ENCODE measurements at regions of chr10 and their contacts with region 1.

Region 1: DNA sequence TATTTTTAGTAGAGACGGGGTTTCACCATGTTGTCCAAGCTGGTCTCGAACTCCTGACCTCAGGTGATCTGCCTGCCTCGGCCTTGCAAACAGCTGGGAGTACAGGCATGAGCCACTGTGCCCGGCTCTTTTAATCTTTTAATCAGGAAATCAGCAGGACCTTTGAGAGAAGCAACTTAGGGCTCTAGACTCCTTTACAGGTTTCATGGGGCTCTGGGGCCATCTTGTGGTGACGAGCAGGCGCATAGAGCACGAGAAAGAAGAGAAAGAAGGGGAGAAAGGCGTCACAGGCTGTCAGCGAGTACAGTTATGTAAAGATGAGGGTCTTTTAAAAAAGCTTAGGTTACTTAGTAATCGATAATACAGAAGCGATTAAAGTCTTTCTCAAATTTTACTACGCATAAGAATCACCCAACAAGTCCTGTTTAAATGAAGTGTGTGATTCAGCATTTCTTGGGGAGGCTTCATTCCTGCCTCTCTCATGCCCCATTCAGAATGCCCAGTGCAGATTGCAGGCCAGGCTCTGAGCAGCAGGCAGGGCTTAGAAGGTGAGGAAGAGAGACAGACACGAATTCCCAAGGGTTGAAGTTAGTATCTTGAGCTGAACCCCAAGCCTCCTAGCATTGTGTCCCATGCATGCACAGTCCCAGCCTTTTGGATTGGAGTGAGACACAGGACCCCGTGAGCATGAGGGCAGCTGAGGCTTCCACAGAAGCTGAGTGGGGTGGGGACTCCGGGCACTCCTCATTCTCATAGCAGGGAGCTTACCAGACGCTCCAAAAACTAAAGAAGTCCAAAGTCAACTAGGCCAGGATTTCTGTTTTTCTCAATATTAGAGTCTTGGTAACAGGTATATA is 23.6 kb upstream of the PFKP start:
- DNase-seq: peak; percentile 56 to 78 (median 71)
- ATAC-seq: peak; percentile 77 to 85
- H3K4me3 ChIP-seq: no peak overlapping the region
- H3K27ac ChIP-seq: no peak overlapping the region
- H3K4me1 ChIP-seq: no peaks in the 10 kb centered on the region
- H3K27me3 ChIP-seq: no peaks in the 10 kb centered on the region

Region 2: DNA sequence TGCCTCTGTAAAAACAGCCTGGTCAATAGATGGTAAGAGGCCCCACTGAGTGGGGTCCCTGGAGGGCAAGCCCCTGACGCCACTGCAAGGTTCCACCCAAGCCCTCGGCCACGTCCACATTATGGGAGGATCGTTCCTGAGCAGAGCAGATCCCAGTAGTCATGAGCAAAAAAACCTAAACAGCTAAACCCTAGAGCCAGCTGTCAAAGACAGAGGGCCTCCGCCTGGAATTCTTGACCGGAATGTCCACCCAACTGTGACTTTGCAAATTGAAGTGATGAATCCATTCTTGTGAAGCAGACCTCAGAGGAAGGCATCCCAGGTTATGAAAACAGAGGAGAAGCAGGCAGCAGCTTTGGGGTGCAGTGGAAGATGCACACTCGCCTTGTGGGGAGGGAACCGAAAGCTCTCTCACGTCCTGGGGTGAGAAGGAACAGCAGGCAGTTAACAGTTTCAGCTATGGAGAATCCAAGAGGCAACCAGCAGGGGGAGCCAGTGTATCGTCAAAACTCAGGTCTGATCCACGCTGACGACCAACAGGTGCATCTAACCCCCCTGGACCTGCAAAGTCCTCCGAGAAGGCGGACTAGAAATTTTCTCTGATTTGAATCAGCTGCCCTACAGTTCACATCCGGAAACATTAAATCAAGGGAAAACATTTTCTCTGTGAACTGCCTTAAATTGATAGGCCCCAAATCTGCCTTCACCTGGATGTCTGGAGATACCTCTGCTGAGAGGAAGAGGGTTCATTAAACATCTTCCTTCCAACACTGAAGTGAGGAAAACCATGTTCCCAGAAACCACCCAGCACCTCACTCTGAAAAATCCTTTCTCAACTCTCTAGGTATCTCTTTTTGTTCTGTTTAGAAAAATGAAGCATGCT is 115.5 kb before region 1 on chr10:
- intact Hi-C with region 1: loop called in 2 of 4 experiments (anchors 5 kb)
- DNase-seq: peak; percentile 50 to 78 (median 70)
- ATAC-seq: peak; percentile 54 to 73
- H3K4me3 ChIP-seq: no peak overlapping the region
- H3K27ac ChIP-seq: no peak overlapping the region
- H3K4me1 ChIP-seq: no peaks in the 10 kb centered on the region
- H3K27me3 ChIP-seq: no peaks in the 10 kb centered on the region

Region 3: GRCh38 chr10:3231951-3232730 is 188.4 kb after region 1 on chr10:
- intact Hi-C with region 1: no loop called
- DNase-seq: no peak
- ATAC-seq: no peak
- H3K4me3 ChIP-seq: no peak overlapping the region
- H3K27ac ChIP-seq: no peak overlapping the region
- H3K4me1 ChIP-seq: no peaks in the 10 kb centered on the region
- H3K27me3 ChIP-seq: no peaks in the 10 kb centered on the region